ENCODE measurements at regions of chr2 and their contacts with region 1.

Region 1: GRCh38 chr2:206154197-206154596 is 5.0 kb downstream of the NDUFS1 start:
- DNase-seq: peak; percentile 35
- ATAC-seq: peak; percentile 84
- H3K4me3 ChIP-seq: no peak overlapping the region
- H3K27ac ChIP-seq: no peak overlapping the region
- H3K4me1 ChIP-seq: peaks cover 8% of the 10 kb centered on the region; the same call in 1 of the 2 replicates
- H3K27me3 ChIP-seq: no peaks in the 10 kb centered on the region
- CTCF ChIP-seq: peak; percentile 37 to 61 (median 59); a peak in 5 of 6 replicates
- EP300 ChIP-seq: no peak
- POLR2A ChIP-seq: no peak
- RAD21 ChIP-seq: peak; percentile 49; the same call in 1 of the 2 replicates

Region 2: GRCh38 chr2:206004004-206004693 is 150.0 kb before region 1 on chr2:
- CTCF ChIA-PET with region 1: interaction called, 5 read pairs
- POLR2A ChIA-PET with region 1: no interaction called
- RAD21 ChIA-PET with region 1: interaction called, 9 read pairs
- SMC1A ChIA-PET with region 1: interaction called, 3 read pairs
- in situ Hi-C with region 1: no loop called
- intact Hi-C with region 1: loop called (anchors 5 kb)
- DNase-seq: no peak
- ATAC-seq: peak; percentile 61
- H3K4me3 ChIP-seq: no peak overlapping the region
- H3K27ac ChIP-seq: no peak overlapping the region
- H3K4me1 ChIP-seq: no peaks in the 10 kb centered on the region
- H3K27me3 ChIP-seq: no peaks in the 10 kb centered on the region
- CTCF ChIP-seq: peak; percentile 47 to 57 (median 50); a peak in 4 of 6 replicates
- EP300 ChIP-seq: no peak
- POLR2A ChIP-seq: no peak
- RAD21 ChIP-seq: peak; percentile 62

Region 3: GRCh38 chr2:206143451-206143850 is 10.7 kb before region 1 on chr2:
- CTCF ChIA-PET with region 1: interaction called, 13 read pairs
- POLR2A ChIA-PET with region 1: interaction called, 6 read pairs
- RAD21 ChIA-PET with region 1: no interaction called
- SMC1A ChIA-PET with region 1: no interaction called
- in situ Hi-C with region 1: no loop called
- intact Hi-C with region 1: no loop called
- DNase-seq: no peak
- ATAC-seq: no peak
- H3K4me3 ChIP-seq: no peak overlapping the region
- H3K27ac ChIP-seq: no peak overlapping the region
- H3K4me1 ChIP-seq: no peaks in the 10 kb centered on the region
- H3K27me3 ChIP-seq: no peaks in the 10 kb centered on the region
- CTCF ChIP-seq: no peak
- EP300 ChIP-seq: no peak
- POLR2A ChIP-seq: no peak
- RAD21 ChIP-seq: no peak

Region 4: DNA sequence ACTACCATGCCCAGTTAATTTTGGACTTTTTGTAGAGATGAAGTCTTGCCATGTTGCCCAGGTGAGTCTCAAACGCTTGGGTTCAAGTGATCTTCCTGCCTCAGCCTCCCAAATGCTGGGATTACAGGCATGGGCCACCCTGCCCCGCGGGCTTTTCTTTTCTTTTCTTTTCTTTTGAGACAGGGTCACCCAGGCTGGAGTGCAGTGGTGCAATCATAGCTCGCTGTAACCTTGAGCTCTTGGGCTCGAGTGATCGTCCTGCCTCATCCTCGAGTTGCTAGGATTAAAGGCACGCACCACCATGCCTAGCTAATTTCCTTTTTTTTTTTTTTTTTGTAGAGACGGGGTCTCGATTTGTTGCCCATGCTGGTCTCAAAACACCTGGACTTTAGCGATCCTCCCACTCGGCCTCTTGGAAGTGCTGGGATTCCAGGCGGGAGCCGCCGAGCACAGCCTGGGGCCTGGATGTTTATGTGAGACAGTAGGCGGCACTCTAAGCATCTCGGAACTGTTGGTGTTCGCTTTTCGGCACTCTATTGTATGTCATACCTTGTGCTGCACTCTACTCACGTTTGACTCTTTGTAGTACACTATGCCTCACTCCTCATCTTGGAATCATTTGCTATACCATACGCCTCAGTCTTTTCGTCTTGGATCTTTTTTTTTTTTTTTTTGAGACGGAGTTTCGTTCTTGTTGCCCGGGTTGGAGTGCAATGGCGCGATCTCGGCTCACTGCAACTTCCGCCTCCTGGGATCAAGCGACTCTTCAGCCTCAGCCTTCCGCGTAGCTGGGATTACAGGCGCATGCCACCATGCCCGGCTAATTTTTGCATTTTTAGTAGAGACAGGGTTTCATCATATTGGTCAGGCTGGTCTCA is 95.8 kb after region 1 on chr2:
- CTCF ChIA-PET with region 1: no interaction called
- POLR2A ChIA-PET with region 1: no interaction called
- RAD21 ChIA-PET with region 1: no interaction called
- SMC1A ChIA-PET with region 1: no interaction called
- in situ Hi-C with region 1: no loop called
- intact Hi-C with region 1: no loop called
- DNase-seq: no peak
- ATAC-seq: peak; percentile 22; the same call in 1 of the 3 replicates
- H3K4me3 ChIP-seq: peak overlapping the region; percentile 40; the same call in 1 of the 2 replicates
- H3K27ac ChIP-seq: no peak overlapping the region
- H3K4me1 ChIP-seq: peaks cover 7% of the 10 kb centered on the region
- H3K27me3 ChIP-seq: peaks cover 0 to 3% of the 10 kb centered on the region in 2 experiments; a peak in 2 of 4 replicates
- CTCF ChIP-seq: peak in 2 of 3 experiments; percentile 13 to 26; a peak in 2 of 6 replicates
- EP300 ChIP-seq: no peak
- POLR2A ChIP-seq: no peak
- RAD21 ChIP-seq: peak; percentile 37; the same call in 1 of the 2 replicates

Measured in GM12878 (cell line).